ENCODE measurements at regions of chr20 and their contacts with region 1.

Region 1: GRCh38 chr20:13546497-13547131 is 92.1 kb downstream of the TASP1 start:
- DNase-seq: peak; percentile 35
- CTCF ChIP-seq: peak; percentile 74

Region 2: GRCh38 chr20:13105864-13106457 is 440.7 kb before region 1 on chr20:
- CTCF ChIA-PET with region 1: interaction called, 11 read pairs
- POLR2A ChIA-PET with region 1: no interaction called
- DNase-seq: peak; percentile 35
- CTCF ChIP-seq: peak; percentile 55

Region 3: GRCh38 chr20:13325033-13325432 is 221.6 kb before region 1 on chr20:
- CTCF ChIA-PET with region 1: interaction called, 44 read pairs
- POLR2A ChIA-PET with region 1: no interaction called
- DNase-seq: no peak
- CTCF ChIP-seq: peak; percentile 35

Region 4: DNA sequence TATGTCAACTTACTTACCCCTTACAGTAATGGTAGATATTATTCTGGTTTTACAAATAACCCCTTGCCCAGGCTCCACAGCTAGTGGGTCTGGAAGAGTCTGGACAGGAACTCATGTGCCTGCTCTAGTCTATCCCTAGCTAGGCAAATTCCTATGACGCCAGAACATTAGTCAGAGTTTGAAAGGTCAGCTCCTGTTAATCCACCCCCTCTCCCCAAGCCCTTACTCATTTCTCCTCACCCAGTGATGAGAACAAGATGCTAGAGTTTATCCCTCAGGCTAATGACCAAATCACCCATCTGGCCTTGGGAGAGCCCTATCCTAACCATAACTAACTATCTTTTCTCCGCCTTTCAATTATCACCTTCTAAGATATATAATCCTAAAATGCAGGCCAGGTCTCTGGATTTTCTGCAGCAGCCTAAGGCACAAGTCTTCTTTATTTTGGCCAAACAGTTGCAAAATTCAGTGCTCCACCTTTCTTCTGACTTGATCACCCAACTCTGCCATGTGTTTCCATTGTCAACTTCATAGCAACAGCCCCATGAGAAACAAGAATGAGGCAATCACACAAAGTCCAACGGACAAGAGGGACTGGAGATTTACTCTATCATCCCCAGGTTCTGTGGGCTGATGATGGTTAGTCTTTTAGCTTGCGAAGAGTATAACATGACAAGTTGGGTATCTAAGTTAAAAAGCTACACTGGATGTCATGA is 21.2 kb before region 1 on chr20:
- CTCF ChIA-PET with region 1: interaction called, 40 read pairs
- POLR2A ChIA-PET with region 1: no interaction called
- DNase-seq: no peak
- CTCF ChIP-seq: no peak

Region 5: GRCh38 chr20:13771853-13772453 is 225.3 kb after region 1 on chr20:
- CTCF ChIA-PET with region 1: interaction called, 18 read pairs
- POLR2A ChIA-PET with region 1: no interaction called
- DNase-seq: peak; percentile 31
- CTCF ChIP-seq: no peak